ENCODE measurements at regions of chr2 and their contacts with region 1.

Region 1: GRCh38 chr2:164792316-164793178 is 49.1 kb downstream of the COBLL1 start:
- DNase-seq: no peak
- ATAC-seq: no peak
- H3K4me3 ChIP-seq: no peak overlapping the region
- H3K27ac ChIP-seq: peak overlapping the region; percentile 57 to 67
- H3K4me1 ChIP-seq: peaks cover 6 to 24% of the 10 kb centered on the region in 2 donors
- H3K27me3 ChIP-seq: no peaks in the 10 kb centered on the region

Region 2: GRCh38 chr2:164009756-164010337 is 782.7 kb before region 1 on chr2:
- intact Hi-C with region 1: no loop called
- DNase-seq: no peak
- ATAC-seq: no peak
- H3K4me3 ChIP-seq: no peak overlapping the region
- H3K27ac ChIP-seq: no peak overlapping the region
- H3K4me1 ChIP-seq: no peaks in the 10 kb centered on the region
- H3K27me3 ChIP-seq: no peaks in the 10 kb centered on the region

Region 3: GRCh38 chr2:164754157-164755093 is 38.1 kb before region 1 on chr2:
- intact Hi-C with region 1: loop called in 1 of 2 experiments (anchors 5 kb)
- DNase-seq: no peak
- ATAC-seq: no peak
- H3K4me3 ChIP-seq: no peak overlapping the region
- H3K27ac ChIP-seq: peak overlapping the region in 1 of 2 donors; percentile 25
- H3K4me1 ChIP-seq: peaks cover 4 to 7% of the 10 kb centered on the region in 2 donors
- H3K27me3 ChIP-seq: no peaks in the 10 kb centered on the region